Activated CD4-positive, alpha-beta T cell treated with anti-CD3 and anti-CD28 coated beads, Interleukin-2, amount 10 ng/mL, durations not matched to agents 24 days and 14 days (primary cell): ENCODE measurements at regions of chr4 and their contacts with region 1.

Region 1: DNA sequence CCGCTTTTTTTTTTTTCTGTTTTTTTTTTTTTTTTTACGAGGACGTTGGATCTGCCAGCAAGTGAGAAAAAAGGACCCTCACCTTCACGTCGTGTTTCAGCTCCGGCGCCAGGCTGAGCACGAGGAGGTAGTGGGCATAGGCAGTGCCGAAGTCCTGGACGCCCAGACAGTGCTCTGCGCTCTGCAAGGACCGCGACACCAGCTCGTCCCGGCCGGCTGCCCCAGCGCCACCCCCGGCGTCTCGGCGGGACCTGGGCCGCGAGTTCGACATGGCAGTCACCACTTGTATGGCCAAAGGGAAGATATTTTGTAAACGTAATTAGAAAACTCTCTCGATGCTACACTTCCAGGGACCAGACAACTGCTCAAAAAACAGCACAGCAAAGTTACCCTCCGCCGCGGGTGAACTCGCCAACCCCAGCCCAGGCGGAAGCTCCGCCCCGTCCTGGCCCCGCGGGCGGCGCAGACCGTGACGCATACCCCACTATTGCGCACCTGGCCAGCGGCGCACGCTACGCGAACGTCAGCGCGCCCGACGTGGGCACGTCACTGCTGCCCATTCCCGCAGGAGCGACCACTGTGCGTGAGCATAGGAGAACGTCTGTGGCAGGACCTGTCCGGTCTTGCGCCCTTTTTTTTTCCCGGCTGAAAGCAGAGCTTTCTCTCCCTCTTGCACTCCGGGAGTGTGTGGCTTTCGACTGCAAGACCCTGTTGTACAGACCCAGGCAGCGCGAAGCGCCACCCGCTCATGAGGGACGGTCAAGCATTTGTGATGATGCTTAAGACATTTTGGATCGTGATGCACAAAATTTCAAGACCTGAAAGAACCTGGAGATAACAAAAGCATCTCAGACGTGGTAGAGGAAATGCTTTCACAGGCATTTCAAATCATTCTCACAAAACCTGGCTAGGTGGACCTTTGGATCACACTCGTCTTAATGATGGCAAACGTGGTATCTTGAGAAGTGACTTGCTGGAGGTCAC is at the start of gene PRMT9:
- DNase-seq: peak; percentile 97
- H3K4me3 Mint-ChIP-seq: peak within 1 kb of the TSS; percentile 99
- H3K27ac Mint-ChIP-seq: peak within 1 kb of the TSS; percentile 97
- H3K4me1 Mint-ChIP-seq: peaks cover 28% of the 10 kb centered on the region
- H3K27me3 Mint-ChIP-seq: peaks cover 8% of the 10 kb centered on the region
- total RNA-seq, gene PRMT9: 8.1 TPM in 2 replicates

Region 2: DNA sequence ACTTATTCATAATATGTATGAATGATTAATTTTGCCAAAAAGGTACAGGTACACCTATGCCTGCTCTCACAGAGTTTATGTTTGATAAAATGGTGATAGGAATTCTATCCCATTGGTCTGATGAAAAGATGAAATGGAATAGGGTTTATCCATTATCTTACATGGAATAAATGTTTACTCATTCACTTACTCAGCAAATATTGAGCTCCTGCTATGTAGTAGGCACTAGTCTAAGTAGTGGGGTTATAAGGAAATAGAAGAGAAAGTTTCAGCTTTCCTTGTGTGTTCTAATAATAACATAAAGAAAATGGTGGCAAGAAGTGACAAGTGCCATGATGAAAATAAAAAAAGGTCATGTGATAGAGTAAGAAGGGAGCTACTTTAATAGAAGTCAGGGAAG is 1149.8 kb before region 1 on chr4:
- intact Hi-C with region 1: no loop called
- DNase-seq: no peak
- H3K4me3 Mint-ChIP-seq: no peak overlapping the region
- H3K27ac Mint-ChIP-seq: no peak overlapping the region
- H3K4me1 Mint-ChIP-seq: no peaks in the 10 kb centered on the region
- H3K27me3 Mint-ChIP-seq: peaks cover 10% of the 10 kb centered on the region

Region 3: DNA sequence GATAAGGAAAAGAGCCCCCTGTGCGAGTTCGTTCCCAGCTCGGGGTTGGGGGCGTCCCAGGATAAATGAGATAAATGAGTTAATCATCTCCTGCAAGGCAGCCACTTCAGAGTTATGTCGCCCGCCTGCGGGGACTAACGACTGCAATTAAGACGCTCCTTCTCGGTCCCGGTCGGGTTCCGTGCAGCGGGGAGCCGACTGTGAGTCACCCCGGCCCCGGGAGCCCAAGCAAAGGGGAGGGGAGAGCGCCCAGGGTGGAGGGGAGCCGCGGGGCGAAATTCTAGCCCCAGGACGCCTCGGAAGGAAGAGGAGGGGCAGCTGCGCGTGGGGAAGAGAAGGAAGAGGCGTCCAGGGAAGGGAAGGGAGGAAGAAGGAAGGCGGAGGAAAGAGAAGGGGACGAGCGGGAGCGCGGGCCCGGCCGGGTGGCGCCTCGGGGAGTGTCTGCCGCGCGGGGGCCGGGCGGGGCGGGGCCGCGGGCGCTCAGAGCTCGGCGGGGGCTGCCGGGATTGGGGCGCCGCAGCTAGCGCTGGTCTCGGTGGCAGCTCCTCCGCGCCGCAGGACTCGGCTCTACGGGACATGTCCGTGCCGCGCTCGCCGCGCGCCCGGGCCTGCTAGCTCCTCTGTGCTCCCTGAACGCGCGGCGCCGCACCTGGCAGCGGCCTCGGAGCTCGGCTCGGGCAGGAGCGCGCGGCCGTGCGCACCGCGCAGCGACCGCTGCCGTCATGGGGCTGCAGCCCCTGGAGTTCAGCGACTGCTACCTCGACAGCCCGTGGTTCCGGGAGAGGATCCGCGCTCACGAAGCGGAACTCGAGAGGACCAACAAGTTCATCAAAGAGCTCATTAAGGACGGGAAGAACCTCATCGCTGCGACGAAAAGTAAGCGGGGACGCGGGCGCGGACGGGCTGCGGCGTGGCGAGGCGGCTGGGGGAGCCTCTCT is 47.8 kb after region 1 on chr4 and contains the start of gene ARHGAP10:
- intact Hi-C with region 1: loop called (anchors 1 kb)
- DNase-seq: peak; percentile 88
- H3K4me3 Mint-ChIP-seq: peak within 1 kb of the TSS; percentile 94
- H3K27ac Mint-ChIP-seq: peak within 1 kb of the TSS; percentile 90
- H3K4me1 Mint-ChIP-seq: peaks cover 34% of the 10 kb centered on the region
- H3K27me3 Mint-ChIP-seq: peaks cover 36% of the 10 kb centered on the region
- total RNA-seq, gene ARHGAP10: 7.4 and 8.3 TPM in 2 replicates